Posterior vena cava (tissue), 2 donors: ENCODE measurements at regions of chr18 and their contacts with region 1.

Region 1: GRCh38 chr18:26618130-26618529 is 69.8 kb upstream of the KCTD1 start:
- DNase-seq: no peak

Region 2: GRCh38 chr18:25976554-25976953 is 641.6 kb before region 1 on chr18:
- intact Hi-C with region 1: no loop called
- DNase-seq: no peak

Region 3: DNA sequence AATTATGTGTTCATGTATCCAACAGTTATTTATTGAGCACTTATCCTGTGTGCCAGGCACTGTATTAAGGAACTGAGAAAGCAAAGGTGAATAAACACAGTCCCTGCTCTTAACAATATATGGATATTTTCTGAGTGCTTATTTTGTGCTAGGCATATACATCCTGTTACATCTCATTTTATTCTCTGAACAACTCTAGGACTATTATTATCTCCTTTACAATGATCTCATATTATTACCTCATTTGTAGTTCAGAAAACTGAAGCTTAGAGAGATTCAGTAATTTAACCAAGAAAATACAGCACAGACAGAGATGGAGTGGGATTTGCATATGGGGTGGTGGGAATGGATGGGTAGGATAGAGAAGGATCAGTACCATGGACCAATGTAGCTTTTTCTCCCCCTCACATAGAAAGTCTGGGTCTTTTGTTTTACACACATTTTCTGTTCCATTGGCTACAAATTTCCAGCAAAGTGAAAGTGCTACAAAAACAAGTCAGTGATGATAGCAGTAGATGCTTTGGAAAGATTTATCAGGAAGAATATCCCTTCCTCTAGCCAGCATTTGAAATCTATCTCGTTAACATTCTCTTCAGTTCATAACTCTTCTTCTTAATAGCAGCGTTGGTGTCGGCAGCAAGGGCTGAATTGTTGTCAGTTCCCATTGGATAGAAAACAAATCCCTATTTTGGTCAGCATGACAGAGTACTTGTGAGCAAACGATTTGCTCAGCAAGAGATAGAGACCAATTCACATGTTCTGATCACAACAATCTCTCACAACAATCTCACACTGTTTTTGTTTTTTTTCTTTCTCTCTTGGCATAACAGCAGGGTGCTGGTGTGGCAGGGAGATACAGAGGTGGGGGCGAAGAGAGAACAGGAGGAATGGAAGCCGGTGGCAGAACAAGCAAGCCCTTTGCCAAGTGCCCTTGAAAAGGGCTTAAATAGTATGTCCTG is 32.5 kb after region 1 on chr18:
- intact Hi-C with region 1: loop called in 1 of 2 experiments (anchors 2 kb)
- DNase-seq: no peak

Region 4: DNA sequence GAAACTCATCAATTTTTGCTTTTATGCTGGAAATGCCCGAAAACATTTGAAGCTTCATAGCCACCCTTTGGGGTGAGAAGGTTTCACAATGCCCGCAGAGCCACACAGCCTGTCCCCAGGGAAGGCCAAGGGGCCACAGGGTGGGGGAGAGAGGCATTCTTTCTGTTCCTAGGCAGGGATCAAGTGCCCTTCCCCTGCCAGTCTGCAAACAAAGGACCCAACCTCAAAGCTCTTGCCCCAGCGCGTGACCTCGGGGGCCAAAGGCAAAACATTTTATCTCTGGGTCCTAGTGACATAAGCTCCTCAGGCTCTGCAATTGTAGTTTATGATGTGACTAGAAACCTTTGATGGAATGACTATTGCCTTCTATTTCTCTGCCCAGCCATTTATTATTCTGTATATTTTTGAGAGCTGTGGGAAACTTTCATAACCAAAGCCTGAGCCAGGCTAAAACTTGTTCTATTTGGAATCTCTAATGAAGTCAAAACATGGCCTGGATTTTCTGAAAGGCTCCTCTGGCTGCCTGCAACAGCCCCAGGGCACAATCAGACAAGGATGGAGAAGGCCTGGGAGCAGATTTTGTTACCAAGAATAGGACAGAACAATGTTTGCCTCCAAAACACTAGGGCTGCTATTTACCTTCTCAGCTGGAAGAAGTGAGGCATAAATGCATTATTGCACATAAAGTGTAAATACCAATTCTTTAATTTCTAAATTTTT is 67.5 kb after region 1 on chr18:
- intact Hi-C with region 1: no loop called
- DNase-seq: no peak